Activated T-helper 1 cell treated with anti-CD3 and anti-CD28 coated beads, Interleukin-12 subunit alpha, Interleukin-12 subunit beta, Interleukin-2, Interleukin-4 antibody, amounts not matched to agents 30 ng/mL and 10 ng/mL and 1 ng/mL, durations not matched to agents 14 hours and 24 hours and 36 hours (primary cell): ENCODE measurements at regions of chr7 and their contacts with region 1.

Region 1: DNA sequence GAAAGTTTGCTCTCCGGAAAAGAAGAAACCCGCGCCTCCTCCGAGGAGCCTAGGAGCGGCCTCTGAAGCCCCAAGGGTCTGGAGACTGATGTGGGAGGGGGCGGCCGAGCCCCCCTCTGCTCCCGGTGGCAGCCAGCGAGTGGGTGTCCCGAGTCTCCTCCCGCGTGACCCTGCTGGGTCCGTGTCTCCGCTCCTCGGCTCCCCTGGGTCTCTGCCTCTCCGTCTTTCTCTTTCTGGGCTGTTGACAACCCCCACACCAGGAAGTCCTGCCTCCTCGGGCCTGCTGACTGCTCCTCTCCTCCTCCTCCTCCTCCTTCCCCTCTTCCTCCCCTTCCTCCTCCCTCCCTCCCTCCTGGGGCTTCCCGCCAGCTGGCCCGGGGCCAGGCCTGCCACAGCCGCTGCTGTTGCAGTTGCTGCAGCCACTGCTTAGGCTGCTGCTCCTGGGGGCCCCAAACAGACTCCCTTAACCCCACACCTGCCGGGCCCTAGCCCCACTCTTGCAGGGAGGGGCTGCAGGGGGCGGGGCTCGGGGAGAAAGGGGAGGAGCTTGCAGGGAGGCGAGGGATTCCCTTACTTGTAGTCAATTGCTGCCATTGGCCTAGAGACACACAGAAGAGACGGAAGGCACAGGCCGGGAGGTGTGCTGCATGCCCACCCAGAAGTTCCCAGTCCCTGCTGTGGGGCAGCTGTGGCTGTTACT is at the start of gene TSC22D4:
- DNase-seq: peak; percentile 85
- H3K4me3 Mint-ChIP-seq: peak within 1 kb of the TSS; percentile 99
- H3K27ac Mint-ChIP-seq: peak within 1 kb of the TSS; percentile 93
- H3K4me1 Mint-ChIP-seq: peaks cover 35% of the 10 kb centered on the region
- H3K27me3 Mint-ChIP-seq: peaks cover 6% of the 10 kb centered on the region
- total RNA-seq, gene TSC22D4: 126 and 134 TPM in 2 replicates

Region 2: GRCh38 chr7:100247152-100247757 is 231.9 kb before region 1 on chr7:
- intact Hi-C with region 1: no loop called
- DNase-seq: no peak
- H3K4me3 Mint-ChIP-seq: no peak overlapping the region
- H3K27ac Mint-ChIP-seq: no peak overlapping the region
- H3K4me1 Mint-ChIP-seq: peaks cover 7% of the 10 kb centered on the region
- H3K27me3 Mint-ChIP-seq: no peaks in the 10 kb centered on the region

Region 3: DNA sequence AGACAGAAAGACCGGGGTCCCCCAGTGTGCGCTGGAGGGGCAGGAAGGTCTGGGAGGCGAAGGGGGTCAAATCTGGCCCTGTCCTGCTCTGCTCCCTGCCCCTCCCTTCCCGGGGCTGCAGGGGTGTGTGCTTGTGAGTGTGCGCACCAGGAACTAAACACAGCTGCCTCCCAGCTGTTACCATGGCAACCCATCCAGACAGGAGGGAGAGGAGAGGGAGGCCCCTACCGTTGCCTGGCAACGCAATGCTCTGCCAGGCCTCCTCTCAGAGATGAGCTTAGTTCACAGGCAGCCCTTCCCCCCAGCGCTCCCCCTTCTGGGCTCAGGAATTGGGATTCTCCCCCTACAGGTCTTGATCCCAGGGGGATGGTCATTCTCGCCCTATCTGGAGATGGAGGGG is 10.7 kb after region 1 on chr7:
- intact Hi-C with region 1: no loop called
- DNase-seq: no peak
- H3K4me3 Mint-ChIP-seq: no peak overlapping the region
- H3K27ac Mint-ChIP-seq: no peak overlapping the region
- H3K4me1 Mint-ChIP-seq: peaks cover 8% of the 10 kb centered on the region
- H3K27me3 Mint-ChIP-seq: peaks cover 16% of the 10 kb centered on the region

Region 4: GRCh38 chr7:100538654-100539435 is 59.7 kb after region 1 on chr7 and contains the start of gene AGFG2:
- intact Hi-C with region 1: loop called (anchors 1 kb)
- DNase-seq: peak; percentile 100
- H3K4me3 Mint-ChIP-seq: peak within 1 kb of the TSS; percentile 98
- H3K27ac Mint-ChIP-seq: peak within 1 kb of the TSS; percentile 85
- H3K4me1 Mint-ChIP-seq: peaks cover 44% of the 10 kb centered on the region
- H3K27me3 Mint-ChIP-seq: no peaks in the 10 kb centered on the region
- total RNA-seq, gene AGFG2: 113 and 124 TPM in 2 replicates

Region 5: DNA sequence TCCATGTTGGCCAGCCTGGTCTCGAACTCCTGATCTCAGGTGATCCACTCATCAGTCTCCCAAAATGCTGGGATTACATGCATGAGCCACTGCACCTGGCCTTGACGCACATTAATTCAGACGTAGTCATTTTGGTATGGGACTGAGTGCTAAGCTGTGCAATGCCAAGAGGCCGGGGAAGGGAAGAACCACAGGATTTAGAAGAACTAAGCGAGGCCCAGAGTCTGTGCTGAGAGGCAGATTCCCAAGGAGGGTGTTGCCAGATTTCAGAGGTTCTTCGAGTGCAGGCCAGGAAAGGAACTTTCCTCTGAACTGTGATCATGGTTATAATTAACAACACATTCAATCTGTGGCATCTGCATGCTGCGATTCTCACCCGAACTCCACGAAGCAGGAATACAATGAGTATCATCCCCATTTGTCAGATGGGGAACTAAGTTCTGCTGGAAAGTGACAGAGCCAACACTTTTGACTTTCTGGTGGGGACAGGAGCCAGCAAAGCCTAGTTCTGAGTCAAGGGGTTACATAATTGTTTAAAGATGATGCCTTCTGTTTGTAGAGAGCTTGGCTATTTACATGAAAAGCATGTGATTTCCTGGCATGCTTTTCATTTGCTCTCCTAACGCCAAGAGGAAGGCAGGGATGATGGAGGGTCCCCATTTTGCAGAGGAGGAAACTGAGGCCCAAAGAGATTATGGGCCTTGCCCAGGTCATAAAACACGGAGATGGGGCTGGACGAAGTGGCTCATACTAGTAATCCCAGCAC is 248.1 kb after region 1 on chr7:
- intact Hi-C with region 1: loop called (anchors 5 kb)
- DNase-seq: no peak
- H3K4me3 Mint-ChIP-seq: no peak overlapping the region
- H3K27ac Mint-ChIP-seq: no peak overlapping the region
- H3K4me1 Mint-ChIP-seq: peaks cover 6% of the 10 kb centered on the region
- H3K27me3 Mint-ChIP-seq: peaks cover 11% of the 10 kb centered on the region